CD8-positive, alpha-beta T cell (primary cell): ENCODE measurements at regions of chr7 and their contacts with region 1.

Region 1: DNA sequence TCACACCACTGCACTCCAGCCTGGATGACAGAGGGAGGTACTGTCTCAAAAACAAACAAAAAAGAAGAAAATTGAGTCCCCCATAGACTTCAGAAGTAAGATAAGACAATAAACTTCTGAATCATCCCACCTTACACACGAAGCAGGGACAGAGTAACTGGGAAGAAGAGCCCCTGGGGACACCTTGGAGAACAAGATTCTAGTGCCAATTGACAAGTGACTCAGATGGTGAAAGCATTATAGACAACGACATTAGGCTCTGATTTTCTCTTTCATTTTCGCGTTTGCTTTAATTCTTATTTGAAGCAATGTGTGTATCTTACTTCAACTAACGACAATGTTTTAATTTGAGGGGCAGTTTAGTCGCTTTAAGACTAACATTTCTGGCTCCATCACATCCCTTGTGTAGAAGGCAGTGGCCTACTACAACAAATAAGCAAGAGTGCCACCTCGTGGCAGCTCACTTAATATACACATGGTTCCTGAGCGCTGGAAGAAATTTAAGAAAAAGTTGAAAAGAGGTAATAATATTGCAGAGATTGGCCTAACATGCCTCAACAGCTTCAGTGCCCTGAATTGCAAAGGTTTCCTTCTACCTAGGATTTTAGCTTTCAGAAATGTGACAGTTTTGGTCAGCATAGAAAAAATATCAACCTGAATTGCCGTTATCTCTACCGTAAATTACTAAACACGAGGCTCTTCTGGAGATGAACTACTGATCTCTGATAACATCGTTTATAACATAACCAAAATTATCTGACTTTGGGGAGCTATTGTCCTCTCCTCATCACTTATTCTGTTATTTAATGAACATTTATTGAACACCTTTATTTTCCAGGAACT is 36.7 kb downstream of the ASNS start:
- DNase-seq: peak; percentile 12 to 67 (median 58)
- ATAC-seq: no peak
- H3K4me3 ChIP-seq: no peak overlapping the region
- H3K4me3 Mint-ChIP-seq: no peak overlapping the region
- H3K27ac ChIP-seq: no peak overlapping the region
- H3K27ac Mint-ChIP-seq: no peak overlapping the region
- H3K4me1 ChIP-seq: no peaks in the 10 kb centered on the region
- H3K4me1 Mint-ChIP-seq: no peaks in the 10 kb centered on the region
- H3K27me3 ChIP-seq: no peaks in the 10 kb centered on the region
- H3K27me3 Mint-ChIP-seq: peaks cover 26% of the 10 kb centered on the region
- CTCF ChIP-seq: peak; percentile 69

Region 2: GRCh38 chr7:97104719-97105238 is 730.7 kb before region 1 on chr7:
- CTCF ChIA-PET with region 1: interaction called, 7 read pairs
- POLR2A ChIA-PET with region 1: no interaction called
- intact Hi-C with region 1: loop called in 1 of 2 experiments (anchors 2 kb)
- DNase-seq: peak; percentile 25 to 71 (median 64)
- ATAC-seq: peak; percentile 51
- H3K4me3 ChIP-seq: no peak overlapping the region
- H3K4me3 Mint-ChIP-seq: no peak overlapping the region
- H3K27ac ChIP-seq: no peak overlapping the region
- H3K27ac Mint-ChIP-seq: no peak overlapping the region
- H3K4me1 ChIP-seq: no peaks in the 10 kb centered on the region
- H3K4me1 Mint-ChIP-seq: no peaks in the 10 kb centered on the region
- H3K27me3 ChIP-seq: no peaks in the 10 kb centered on the region
- H3K27me3 Mint-ChIP-seq: peaks cover 32% of the 10 kb centered on the region
- CTCF ChIP-seq: peak; percentile 28

Region 3: GRCh38 chr7:97145068-97145467 is 690.4 kb before region 1 on chr7:
- CTCF ChIA-PET with region 1: interaction called, 4 read pairs
- POLR2A ChIA-PET with region 1: no interaction called
- intact Hi-C with region 1: loop called in 1 of 2 experiments (anchors 2 kb)
- DNase-seq: peak in 2 of 9 experiments; percentile 22 to 33
- ATAC-seq: no peak
- H3K4me3 ChIP-seq: no peak overlapping the region
- H3K4me3 Mint-ChIP-seq: no peak overlapping the region
- H3K27ac ChIP-seq: no peak overlapping the region
- H3K27ac Mint-ChIP-seq: no peak overlapping the region
- H3K4me1 ChIP-seq: no peaks in the 10 kb centered on the region
- H3K4me1 Mint-ChIP-seq: peaks cover 5% of the 10 kb centered on the region
- H3K27me3 ChIP-seq: no peaks in the 10 kb centered on the region
- H3K27me3 Mint-ChIP-seq: no peaks in the 10 kb centered on the region
- CTCF ChIP-seq: peak; percentile 58

Region 4: DNA sequence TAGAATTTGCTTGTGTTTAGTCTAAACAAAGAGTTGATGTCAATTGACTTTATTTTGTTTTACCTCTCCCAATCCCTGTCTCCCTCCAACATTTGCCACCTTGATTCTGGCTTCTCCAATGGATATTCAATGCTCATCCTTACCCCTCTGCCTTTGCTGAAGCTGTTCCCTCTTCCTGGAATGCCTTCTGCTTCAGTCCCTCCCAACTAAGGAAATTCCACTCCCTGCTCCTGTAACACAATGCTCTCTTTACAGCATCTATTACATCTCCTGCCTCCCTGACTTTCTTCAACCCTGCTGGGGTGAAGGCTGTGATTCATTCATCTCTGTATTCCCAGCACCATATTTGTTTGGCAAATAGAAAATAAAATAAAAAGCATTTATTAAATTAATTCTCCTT is 138.1 kb before region 1 on chr7:
- CTCF ChIA-PET with region 1: no interaction called
- POLR2A ChIA-PET with region 1: no interaction called
- intact Hi-C with region 1: no loop called
- DNase-seq: no peak
- ATAC-seq: no peak
- H3K4me3 ChIP-seq: no peak overlapping the region
- H3K4me3 Mint-ChIP-seq: no peak overlapping the region
- H3K27ac ChIP-seq: no peak overlapping the region
- H3K27ac Mint-ChIP-seq: no peak overlapping the region
- H3K4me1 ChIP-seq: no peaks in the 10 kb centered on the region
- H3K4me1 Mint-ChIP-seq: no peaks in the 10 kb centered on the region
- H3K27me3 ChIP-seq: no peaks in the 10 kb centered on the region
- H3K27me3 Mint-ChIP-seq: peaks cover 3% of the 10 kb centered on the region
- CTCF ChIP-seq: no peak

Region 5: GRCh38 chr7:97845622-97846203 is 10.2 kb after region 1 on chr7:
- CTCF ChIA-PET with region 1: interaction called, 18 read pairs
- POLR2A ChIA-PET with region 1: no interaction called
- intact Hi-C with region 1: no loop called
- DNase-seq: peak in 2 of 9 experiments; percentile 16 to 24
- ATAC-seq: no peak
- H3K4me3 ChIP-seq: no peak overlapping the region
- H3K4me3 Mint-ChIP-seq: no peak overlapping the region
- H3K27ac ChIP-seq: no peak overlapping the region
- H3K27ac Mint-ChIP-seq: no peak overlapping the region
- H3K4me1 ChIP-seq: no peaks in the 10 kb centered on the region
- H3K4me1 Mint-ChIP-seq: no peaks in the 10 kb centered on the region
- H3K27me3 ChIP-seq: no peaks in the 10 kb centered on the region
- H3K27me3 Mint-ChIP-seq: peaks cover 3% of the 10 kb centered on the region
- CTCF ChIP-seq: peak; percentile 35